Transverse colon (tissue), 4 donors: ENCODE measurements at regions of chr9 and their contacts with region 1.

Region 1: GRCh38 chr9:132234535-132234934 is 72.7 kb downstream of the NTNG2 start:
- DNase-seq: no peak
- H3K4me3 ChIP-seq: no peak overlapping the region
- H3K27ac ChIP-seq: no peak overlapping the region
- H3K4me1 ChIP-seq: no peaks in the 10 kb centered on the region
- H3K27me3 ChIP-seq: peaks cover 26% of the 10 kb centered on the region
- CTCF ChIP-seq: no peak
- EP300 ChIP-seq: no peak
- POLR2A ChIP-seq: no peak

Region 2: GRCh38 chr9:130461218-130461630 is 1773.3 kb before region 1 on chr9:
- in situ Hi-C with region 1: no loop called
- intact Hi-C with region 1: no loop called
- DNase-seq: peak; percentile 63
- H3K4me3 ChIP-seq: no peak overlapping the region
- H3K27ac ChIP-seq: no peak overlapping the region
- H3K4me1 ChIP-seq: no peaks in the 10 kb centered on the region
- H3K27me3 ChIP-seq: no peaks in the 10 kb centered on the region
- CTCF ChIP-seq: peak; percentile 79 to 95 (median 92)
- EP300 ChIP-seq: no peak
- POLR2A ChIP-seq: no peak

Region 3: GRCh38 chr9:131707733-131708157 is 526.8 kb before region 1 on chr9:
- in situ Hi-C with region 1: no loop called
- intact Hi-C with region 1: no loop called
- DNase-seq: no peak
- H3K4me3 ChIP-seq: no peak overlapping the region
- H3K27ac ChIP-seq: peak overlapping the region; percentile 57 to 77 (median 65)
- H3K4me1 ChIP-seq: peaks cover 16 to 79% (median 55%) of the 10 kb centered on the region in 4 donors
- H3K27me3 ChIP-seq: no peaks in the 10 kb centered on the region
- CTCF ChIP-seq: no peak
- EP300 ChIP-seq: no peak
- POLR2A ChIP-seq: no peak

Region 4: DNA sequence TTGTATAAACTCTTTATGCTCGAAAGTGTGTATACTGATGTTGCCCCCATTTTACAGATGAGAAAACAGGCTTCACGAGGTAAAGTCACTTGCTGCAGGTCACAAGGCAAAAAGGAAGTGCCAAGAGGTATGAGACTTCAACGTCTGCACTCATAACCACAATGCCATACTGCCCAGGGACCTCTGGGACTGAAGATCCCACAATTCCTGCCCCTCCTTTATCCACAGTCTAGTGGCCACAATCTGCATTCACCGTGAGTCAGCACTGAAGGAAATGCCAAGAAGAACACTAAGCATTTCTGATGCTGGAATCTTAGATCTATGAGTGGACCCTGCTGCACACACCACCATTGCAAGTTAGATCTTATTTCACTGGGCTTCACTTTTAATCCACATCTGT is 192.2 kb before region 1 on chr9:
- in situ Hi-C with region 1: no loop called
- intact Hi-C with region 1: no loop called
- DNase-seq: no peak
- H3K4me3 ChIP-seq: no peak overlapping the region
- H3K27ac ChIP-seq: no peak overlapping the region
- H3K4me1 ChIP-seq: no peaks in the 10 kb centered on the region
- H3K27me3 ChIP-seq: no peaks in the 10 kb centered on the region
- CTCF ChIP-seq: no peak
- EP300 ChIP-seq: no peak
- POLR2A ChIP-seq: no peak

Region 5: DNA sequence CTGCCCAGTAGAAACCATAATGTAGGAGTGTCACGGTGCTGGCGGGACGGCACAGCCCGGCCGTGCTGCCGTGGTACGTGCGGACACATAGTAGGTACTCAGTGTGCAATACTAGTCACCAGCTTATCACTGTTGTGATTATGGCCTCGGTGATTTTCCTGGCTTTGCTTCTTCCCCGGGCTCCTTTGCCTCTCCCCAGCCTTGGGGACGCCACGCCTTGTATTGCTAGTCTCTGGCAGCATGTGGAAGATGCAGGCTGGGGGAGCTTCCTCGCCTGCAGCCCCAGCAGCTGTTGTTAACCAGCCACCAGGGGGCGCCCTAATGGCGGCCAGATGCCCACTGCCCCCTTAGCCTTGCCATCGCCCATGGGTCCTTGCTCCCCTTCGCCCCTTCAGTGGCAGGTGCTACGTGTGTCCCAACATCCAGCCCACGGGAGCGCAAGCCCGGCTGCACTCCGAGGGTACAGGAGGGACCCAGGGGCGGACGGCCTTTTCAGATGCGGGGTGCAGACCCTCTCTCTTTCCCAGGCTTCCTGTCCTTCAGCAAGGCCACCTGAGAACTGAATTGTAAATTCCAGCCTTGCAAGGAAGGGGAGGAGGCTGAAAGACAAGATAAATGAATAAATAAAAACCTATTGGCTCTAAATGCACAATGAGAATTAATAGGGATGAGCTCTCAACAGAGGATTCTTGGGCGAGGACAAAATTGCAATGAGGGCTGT is 64.7 kb before region 1 on chr9:
- in situ Hi-C with region 1: no loop called
- intact Hi-C with region 1: loop called (anchors 5 kb)
- DNase-seq: peak; percentile 36
- H3K4me3 ChIP-seq: no peak overlapping the region
- H3K27ac ChIP-seq: no peak overlapping the region
- H3K4me1 ChIP-seq: no peaks in the 10 kb centered on the region
- H3K27me3 ChIP-seq: peaks cover 57% of the 10 kb centered on the region
- CTCF ChIP-seq: peak; percentile 62 to 80 (median 75)
- EP300 ChIP-seq: no peak
- POLR2A ChIP-seq: no peak

Region 6: DNA sequence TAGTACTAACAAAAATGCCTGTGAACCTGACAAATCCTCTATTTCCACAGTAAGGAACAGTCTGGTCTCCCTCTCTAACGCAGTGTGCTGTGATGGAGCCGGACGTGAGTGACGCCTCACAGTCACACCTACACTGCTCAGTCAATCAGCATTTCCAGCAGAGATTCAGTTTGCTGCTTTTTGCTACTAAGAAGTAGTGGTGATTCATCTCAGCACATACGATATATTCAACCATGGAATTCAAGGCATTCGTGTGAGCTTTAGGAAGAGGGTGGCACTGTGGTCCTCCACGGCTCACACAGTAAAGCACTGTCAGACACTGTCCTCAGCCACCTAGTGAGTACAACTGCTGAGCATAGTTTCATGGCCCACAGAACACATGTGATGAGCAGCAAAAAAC is 49.3 kb after region 1 on chr9:
- in situ Hi-C with region 1: no loop called
- intact Hi-C with region 1: no loop called
- DNase-seq: no peak
- H3K4me3 ChIP-seq: no peak overlapping the region
- H3K27ac ChIP-seq: no peak overlapping the region
- H3K4me1 ChIP-seq: no peaks in the 10 kb centered on the region
- H3K27me3 ChIP-seq: no peaks in the 10 kb centered on the region
- CTCF ChIP-seq: no peak
- EP300 ChIP-seq: no peak
- POLR2A ChIP-seq: no peak